ENCODE measurements at regions of chr15 and their contacts with region 1.

Region 1: GRCh38 chr15:81176291-81176893 is 20.3 kb upstream of the IL16 start:
- DNase-seq: no peak
- ATAC-seq: no peak
- H3K4me3 Mint-ChIP-seq: no peak overlapping the region
- H3K27ac Mint-ChIP-seq: no peak overlapping the region
- H3K4me1 Mint-ChIP-seq: no peaks in the 10 kb centered on the region
- H3K27me3 Mint-ChIP-seq: peaks cover 12% of the 10 kb centered on the region
- CTCF ChIP-seq: no peak

Region 2: DNA sequence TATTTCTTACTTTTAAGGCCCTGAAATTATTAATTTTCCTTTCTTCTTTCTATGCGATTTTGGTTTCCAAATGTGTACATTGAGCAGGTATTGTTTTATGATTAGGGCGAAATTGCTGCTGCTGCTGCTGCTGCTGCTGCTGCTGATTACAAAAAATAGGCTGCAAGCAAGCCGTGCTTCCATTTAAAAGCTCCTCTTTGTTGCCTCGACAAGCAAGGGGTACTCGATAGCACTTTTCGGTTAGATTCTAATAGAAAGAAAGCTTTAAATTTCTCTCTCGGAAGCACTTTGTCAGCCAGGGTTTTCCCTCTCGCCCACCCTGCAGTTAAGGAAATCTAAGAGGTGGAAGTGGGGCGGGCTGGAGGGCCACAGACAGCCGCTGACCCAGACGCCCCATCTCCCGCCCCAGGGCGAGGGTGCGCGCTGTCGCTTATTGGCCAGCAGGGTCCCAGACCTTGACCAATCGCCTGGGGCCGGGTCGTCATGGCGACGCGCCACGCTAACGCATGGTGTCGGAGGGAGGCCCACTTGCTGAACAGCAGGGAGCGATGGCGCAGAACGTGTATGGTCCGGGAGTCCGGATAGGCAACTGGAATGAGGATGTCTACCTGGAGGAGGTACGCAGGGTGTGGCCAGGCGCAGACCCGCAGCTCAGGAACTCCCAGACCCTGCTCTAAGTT is 42.5 kb before region 1 on chr15 and contains the start of gene CFAP161:
- CTCF ChIA-PET with region 1: no interaction called
- POLR2A ChIA-PET with region 1: no interaction called
- intact Hi-C with region 1: no loop called
- DNase-seq: peak; percentile 66
- ATAC-seq: peak; percentile 94
- H3K4me3 Mint-ChIP-seq: peak within 1 kb of the TSS; percentile 40
- H3K27ac Mint-ChIP-seq: no peak within 1 kb of the TSS
- H3K4me1 Mint-ChIP-seq: peaks cover 8% of the 10 kb centered on the region
- H3K27me3 Mint-ChIP-seq: peaks cover 47% of the 10 kb centered on the region
- CTCF ChIP-seq: no peak
- total RNA-seq, gene CFAP161: not detected

Region 3: GRCh38 chr15:81163961-81164800 is 12.2 kb before region 1 on chr15:
- CTCF ChIA-PET with region 1: no interaction called
- POLR2A ChIA-PET with region 1: no interaction called
- intact Hi-C with region 1: no loop called
- DNase-seq: no peak
- ATAC-seq: no peak
- H3K4me3 Mint-ChIP-seq: no peak overlapping the region
- H3K27ac Mint-ChIP-seq: no peak overlapping the region
- H3K4me1 Mint-ChIP-seq: peaks cover 21% of the 10 kb centered on the region
- H3K27me3 Mint-ChIP-seq: peaks cover 8% of the 10 kb centered on the region
- CTCF ChIP-seq: no peak

Region 4: DNA sequence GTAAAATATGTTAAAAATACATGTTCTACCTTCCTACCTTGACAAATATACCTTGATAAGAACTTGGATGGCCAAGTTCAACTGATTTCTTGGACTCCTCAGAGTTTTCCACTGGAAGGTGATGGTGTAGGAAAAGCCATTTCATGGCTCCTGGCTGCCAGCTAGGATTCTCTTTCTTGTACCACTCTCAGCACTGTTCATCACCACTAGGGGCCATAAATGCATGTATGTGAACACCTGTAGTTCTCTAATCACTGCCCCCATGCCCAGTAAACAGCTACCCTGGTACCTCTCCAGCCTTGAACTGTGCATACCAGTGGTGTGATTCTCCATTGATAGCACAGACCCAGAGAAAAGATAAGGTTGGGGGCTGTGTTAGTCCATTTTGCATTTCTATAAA is 58.4 kb after region 1 on chr15:
- CTCF ChIA-PET with region 1: no interaction called
- POLR2A ChIA-PET with region 1: no interaction called
- intact Hi-C with region 1: loop called (anchors 2 kb)
- DNase-seq: no peak
- ATAC-seq: no peak
- H3K4me3 Mint-ChIP-seq: no peak overlapping the region
- H3K27ac Mint-ChIP-seq: no peak overlapping the region
- H3K4me1 Mint-ChIP-seq: no peaks in the 10 kb centered on the region
- H3K27me3 Mint-ChIP-seq: no peaks in the 10 kb centered on the region
- CTCF ChIP-seq: no peak